ENCODE measurements at regions of chr18 and their contacts with region 1.

Region 1: GRCh38 chr18:61502472-61502871 is 169.2 kb downstream of the CDH20 start:
- DNase-seq: peak; percentile 43
- H3K4me3 ChIP-seq: no peak overlapping the region
- H3K27ac ChIP-seq: no peak overlapping the region
- H3K4me1 ChIP-seq: no peaks in the 10 kb centered on the region
- H3K27me3 ChIP-seq: no peaks in the 10 kb centered on the region
- CTCF ChIP-seq: peak; percentile 26 to 72 (median 70)
- POLR2A ChIP-seq: no peak

Region 2: DNA sequence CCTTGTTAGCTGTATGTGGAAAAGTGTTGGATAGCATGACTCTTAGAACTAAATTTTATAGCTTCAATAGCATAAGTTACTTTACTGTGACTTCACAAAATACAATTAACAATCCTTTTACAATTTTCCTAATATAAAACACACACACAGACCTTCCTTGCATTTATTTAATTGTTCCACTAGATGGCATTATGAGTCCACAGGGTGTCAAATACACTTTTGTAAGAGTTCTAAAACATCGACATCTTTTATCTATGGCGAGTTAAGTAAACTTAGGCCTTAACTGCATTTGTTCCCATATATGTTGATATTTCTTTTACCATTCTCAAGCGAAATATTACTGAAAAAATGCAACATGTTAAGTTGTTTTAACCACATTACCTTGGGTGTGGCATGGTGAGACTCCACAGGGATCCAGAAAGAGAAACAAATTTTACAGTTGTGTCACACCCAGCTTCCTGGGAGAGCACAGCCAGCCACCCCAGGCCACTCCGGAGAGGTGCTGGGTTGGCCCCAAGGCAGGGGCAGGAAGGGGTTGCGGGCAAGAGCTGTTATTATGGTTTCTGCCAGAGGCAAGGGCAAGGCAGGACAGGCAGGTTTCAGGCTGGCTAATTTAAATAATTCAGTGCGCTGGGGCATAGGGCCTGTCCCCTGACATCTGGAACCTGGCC is 817.5 kb before region 1 on chr18:
- intact Hi-C with region 1: loop called (anchors 5 kb)
- DNase-seq: no peak
- H3K4me3 ChIP-seq: no peak overlapping the region
- H3K27ac ChIP-seq: no peak overlapping the region
- H3K4me1 ChIP-seq: no peaks in the 10 kb centered on the region
- H3K27me3 ChIP-seq: no peaks in the 10 kb centered on the region
- CTCF ChIP-seq: peak; percentile 27 to 60 (median 42)
- POLR2A ChIP-seq: no peak

Region 3: DNA sequence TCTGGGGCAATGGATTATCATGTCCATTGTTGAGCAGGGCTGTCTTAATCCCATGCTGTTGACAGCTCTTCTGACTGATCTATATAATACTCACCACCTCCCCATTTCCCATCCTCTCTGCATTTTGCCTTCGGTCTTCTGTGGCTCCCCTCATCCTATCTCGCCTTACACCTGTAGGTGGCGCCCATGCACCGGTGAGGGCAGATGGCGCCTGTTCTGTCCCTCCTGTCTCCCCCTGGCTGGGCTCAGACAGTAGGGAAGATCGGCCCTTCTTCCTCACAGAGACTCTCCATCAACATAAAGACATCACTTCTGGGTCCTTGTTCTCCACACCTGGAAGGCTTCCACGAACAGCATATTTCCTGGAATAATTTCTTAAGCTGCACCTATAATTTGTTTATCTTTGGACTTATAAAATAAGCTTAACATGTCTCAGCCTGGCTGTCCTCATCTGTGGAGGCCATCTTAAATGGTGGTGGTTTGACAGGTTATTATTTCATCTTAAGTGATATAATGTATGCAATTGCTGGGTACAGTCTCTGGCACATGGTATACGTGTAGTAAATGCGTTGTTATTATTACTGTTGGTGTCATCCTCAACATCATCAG is 180.1 kb before region 1 on chr18:
- intact Hi-C with region 1: loop called (anchors 5 kb)
- DNase-seq: no peak
- H3K4me3 ChIP-seq: no peak overlapping the region
- H3K27ac ChIP-seq: no peak overlapping the region
- H3K4me1 ChIP-seq: no peaks in the 10 kb centered on the region
- H3K27me3 ChIP-seq: no peaks in the 10 kb centered on the region
- CTCF ChIP-seq: peak in 3 of 4 experiments; percentile 24 to 39 (median 29)
- POLR2A ChIP-seq: no peak

Region 4: DNA sequence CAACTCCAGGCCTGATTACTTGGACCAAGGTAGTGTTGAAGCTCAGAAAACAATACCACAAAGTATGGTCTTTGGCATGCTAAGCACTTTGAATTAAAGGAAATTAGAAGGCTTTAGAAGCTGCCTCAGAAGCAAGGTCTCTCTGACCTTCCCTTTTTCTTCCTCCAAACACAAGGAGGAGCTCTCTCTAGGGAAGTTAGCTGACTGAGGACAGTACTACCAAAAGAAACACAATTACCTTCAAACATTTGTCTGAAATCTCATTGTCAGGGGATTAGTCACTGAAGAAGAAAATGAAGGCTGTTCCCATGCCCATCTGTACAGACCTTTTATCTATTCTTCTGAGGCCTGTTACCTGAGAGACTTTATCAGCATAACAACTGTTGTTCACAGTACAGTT is 110.0 kb after region 1 on chr18:
- intact Hi-C with region 1: no loop called
- DNase-seq: no peak
- H3K4me3 ChIP-seq: no peak overlapping the region
- H3K27ac ChIP-seq: no peak overlapping the region
- H3K4me1 ChIP-seq: no peaks in the 10 kb centered on the region
- H3K27me3 ChIP-seq: no peaks in the 10 kb centered on the region
- CTCF ChIP-seq: peak in 1 of 4 experiments; percentile 16
- POLR2A ChIP-seq: no peak